CD4-positive, alpha-beta T cell (primary cell): ENCODE measurements at regions of chr12 and their contacts with region 1.

Region 1: GRCh38 chr12:1939801-1940607 is 21.6 kb upstream of the CACNA2D4 start:
- DNase-seq: peak; percentile 83 to 97 (median 91)
- ATAC-seq: peak; percentile 100
- H3K4me3 ChIP-seq: no peak overlapping the region
- H3K4me3 Mint-ChIP-seq: no peak overlapping the region
- H3K27ac ChIP-seq: peak overlapping the region in 1 of 2 donors; percentile 38
- H3K27ac Mint-ChIP-seq: no peak overlapping the region
- H3K4me1 ChIP-seq: peaks cover 6% of the 10 kb centered on the region
- H3K4me1 Mint-ChIP-seq: peaks cover 6% of the 10 kb centered on the region
- H3K27me3 ChIP-seq: no peaks in the 10 kb centered on the region
- H3K27me3 Mint-ChIP-seq: no peaks in the 10 kb centered on the region
- CTCF ChIP-seq: peak; percentile 96

Region 2: DNA sequence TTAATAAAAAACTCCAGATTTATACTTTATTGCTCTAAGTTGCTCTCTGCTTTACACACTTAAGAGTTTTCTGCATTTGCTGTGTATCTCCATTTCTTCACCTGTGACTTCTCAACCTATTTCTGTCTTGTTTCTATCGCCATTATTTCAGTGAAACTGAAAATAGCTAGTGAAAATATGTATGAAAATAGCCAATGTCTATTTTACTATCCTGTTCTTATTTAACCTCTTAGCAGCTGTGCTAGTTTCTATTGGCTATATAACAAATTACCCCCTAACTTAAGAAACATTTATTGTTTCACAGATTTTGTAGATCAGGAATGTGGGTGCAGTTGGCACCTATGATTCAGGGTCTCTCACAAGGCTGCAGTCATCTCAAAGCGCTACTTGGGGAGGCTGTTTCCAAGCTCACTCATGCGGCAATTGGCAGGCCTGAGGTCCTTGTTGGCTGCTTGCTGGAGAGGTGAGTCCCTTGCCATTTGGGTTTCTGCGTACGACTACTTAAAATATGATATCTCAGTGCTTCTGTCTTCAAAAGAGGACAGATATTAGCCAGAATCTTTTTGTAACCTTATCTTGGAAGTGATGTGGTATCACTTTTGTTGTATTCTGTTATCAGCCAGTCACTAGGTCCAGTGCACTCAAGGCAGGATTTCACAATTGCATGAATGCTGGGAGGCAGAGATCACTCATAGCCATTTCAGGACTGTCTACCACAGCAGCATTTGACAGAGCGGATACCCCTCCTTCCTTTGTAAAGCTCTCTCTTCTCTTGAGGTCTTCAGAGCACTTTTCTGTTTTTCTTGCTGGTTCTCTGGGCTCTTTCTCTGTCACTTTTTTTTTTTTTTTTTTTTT is 941.8 kb before region 1 on chr12:
- CTCF ChIA-PET with region 1: no interaction called
- POLR2A ChIA-PET with region 1: no interaction called
- intact Hi-C with region 1: no loop called
- DNase-seq: no peak
- ATAC-seq: no peak
- H3K4me3 ChIP-seq: no peak overlapping the region
- H3K4me3 Mint-ChIP-seq: no peak overlapping the region
- H3K27ac ChIP-seq: no peak overlapping the region
- H3K27ac Mint-ChIP-seq: no peak overlapping the region
- H3K4me1 ChIP-seq: no peaks in the 10 kb centered on the region
- H3K4me1 Mint-ChIP-seq: peaks cover 34% of the 10 kb centered on the region
- H3K27me3 ChIP-seq: no peaks in the 10 kb centered on the region
- H3K27me3 Mint-ChIP-seq: no peaks in the 10 kb centered on the region
- CTCF ChIP-seq: no peak

Region 3: DNA sequence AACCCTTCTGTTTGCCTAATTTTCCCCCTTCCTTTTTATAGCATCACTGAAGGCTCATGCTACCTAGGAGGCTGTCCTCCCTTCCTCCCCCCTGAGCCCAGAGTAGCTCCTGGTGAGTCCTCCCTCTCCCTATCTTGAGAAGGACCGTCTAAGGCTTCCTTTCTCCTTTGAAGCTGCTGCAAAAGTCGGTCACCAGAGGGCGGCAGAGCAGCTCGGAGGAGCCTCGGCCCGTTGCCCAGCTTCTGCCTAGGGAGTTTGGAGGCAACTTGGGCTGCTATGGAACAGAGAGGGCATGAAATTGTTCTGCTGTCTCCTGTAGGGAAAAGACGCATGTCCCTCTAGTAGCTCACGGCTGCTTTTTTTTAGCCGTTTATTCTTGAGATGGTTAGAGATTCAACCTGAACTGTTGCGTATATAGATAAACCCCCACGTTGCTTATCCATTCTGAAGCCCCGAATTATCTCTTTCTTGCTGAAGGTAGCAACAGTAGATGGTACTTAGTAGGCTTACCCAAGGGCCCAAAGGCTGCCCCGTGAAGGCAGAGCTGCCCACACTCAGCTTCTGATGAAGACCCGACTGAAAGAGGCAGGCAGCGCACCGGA is 305.3 kb before region 1 on chr12:
- CTCF ChIA-PET with region 1: interaction called, 19 read pairs
- POLR2A ChIA-PET with region 1: interaction called, 8 read pairs
- intact Hi-C with region 1: loop called in 1 of 2 experiments (anchors 1 kb)
- DNase-seq: peak; percentile 40 to 75 (median 54)
- ATAC-seq: peak; percentile 68
- H3K4me3 ChIP-seq: no peak overlapping the region
- H3K4me3 Mint-ChIP-seq: no peak overlapping the region
- H3K27ac ChIP-seq: no peak overlapping the region
- H3K27ac Mint-ChIP-seq: no peak overlapping the region
- H3K4me1 ChIP-seq: peaks cover 21% of the 10 kb centered on the region
- H3K4me1 Mint-ChIP-seq: peaks cover 20% of the 10 kb centered on the region
- H3K27me3 ChIP-seq: peaks cover 34 to 43% of the 10 kb centered on the region in 2 experiments
- H3K27me3 Mint-ChIP-seq: peaks cover 54% of the 10 kb centered on the region
- CTCF ChIP-seq: peak; percentile 61

Region 4: GRCh38 chr12:1650260-1650977 is 289.6 kb before region 1 on chr12:
- CTCF ChIA-PET with region 1: interaction called, 52 read pairs
- POLR2A ChIA-PET with region 1: interaction called, 3 read pairs
- intact Hi-C with region 1: loop called (anchors 1 kb)
- DNase-seq: no peak
- ATAC-seq: no peak
- H3K4me3 ChIP-seq: no peak overlapping the region
- H3K4me3 Mint-ChIP-seq: no peak overlapping the region
- H3K27ac ChIP-seq: no peak overlapping the region
- H3K27ac Mint-ChIP-seq: no peak overlapping the region
- H3K4me1 ChIP-seq: peaks cover 7% of the 10 kb centered on the region
- H3K4me1 Mint-ChIP-seq: no peaks in the 10 kb centered on the region
- H3K27me3 ChIP-seq: no peaks in the 10 kb centered on the region
- H3K27me3 Mint-ChIP-seq: peaks cover 4% of the 10 kb centered on the region
- CTCF ChIP-seq: no peak

Region 5: DNA sequence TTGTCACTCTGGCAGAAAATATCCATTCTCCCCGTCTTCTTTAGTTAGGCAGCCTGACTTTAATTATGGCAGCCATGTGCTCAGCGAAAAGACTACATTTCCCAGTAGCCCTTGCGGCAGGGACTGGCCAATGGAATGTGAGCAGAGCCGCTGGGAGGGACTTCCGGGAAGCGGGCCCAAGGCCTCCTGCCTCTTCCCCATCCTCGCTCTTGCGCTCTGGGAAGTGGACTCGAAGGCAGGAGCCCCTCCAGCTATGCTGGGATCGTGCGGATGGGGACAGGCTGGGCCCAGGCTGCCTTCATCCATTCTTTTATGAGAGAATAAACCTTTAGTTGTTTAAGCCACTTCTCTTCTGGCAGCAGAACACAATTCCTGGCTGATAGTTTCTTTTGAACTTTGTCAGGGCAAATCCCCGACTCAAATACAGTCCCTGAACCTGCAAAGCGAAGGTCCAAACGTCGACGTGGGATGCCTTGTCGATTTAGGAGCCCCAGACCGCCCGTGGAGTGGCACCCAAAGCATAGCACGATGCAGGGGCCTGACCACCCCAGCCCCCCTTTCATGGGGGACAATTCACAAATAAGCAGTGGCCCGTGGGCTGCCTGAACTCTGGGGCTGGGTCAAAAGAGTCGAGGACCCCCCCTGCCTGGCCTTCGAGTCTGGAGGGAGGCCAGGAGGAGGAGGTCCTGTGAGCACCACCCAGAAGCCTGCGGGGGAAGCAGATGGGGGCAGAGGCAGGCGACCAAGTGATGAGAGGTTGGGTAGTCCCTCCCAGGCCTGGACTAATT is 135.3 kb before region 1 on chr12:
- CTCF ChIA-PET with region 1: interaction called, 15 read pairs
- POLR2A ChIA-PET with region 1: no interaction called
- intact Hi-C with region 1: no loop called
- DNase-seq: peak; percentile 74 to 93 (median 84)
- ATAC-seq: peak; percentile 99
- H3K4me3 ChIP-seq: no peak overlapping the region
- H3K4me3 Mint-ChIP-seq: peak overlapping the region; percentile 1
- H3K27ac ChIP-seq: no peak overlapping the region
- H3K27ac Mint-ChIP-seq: peak overlapping the region; percentile 47
- H3K4me1 ChIP-seq: peaks cover 43% of the 10 kb centered on the region
- H3K4me1 Mint-ChIP-seq: peaks cover 7% of the 10 kb centered on the region
- H3K27me3 ChIP-seq: no peaks in the 10 kb centered on the region
- H3K27me3 Mint-ChIP-seq: no peaks in the 10 kb centered on the region
- CTCF ChIP-seq: no peak

Region 6: DNA sequence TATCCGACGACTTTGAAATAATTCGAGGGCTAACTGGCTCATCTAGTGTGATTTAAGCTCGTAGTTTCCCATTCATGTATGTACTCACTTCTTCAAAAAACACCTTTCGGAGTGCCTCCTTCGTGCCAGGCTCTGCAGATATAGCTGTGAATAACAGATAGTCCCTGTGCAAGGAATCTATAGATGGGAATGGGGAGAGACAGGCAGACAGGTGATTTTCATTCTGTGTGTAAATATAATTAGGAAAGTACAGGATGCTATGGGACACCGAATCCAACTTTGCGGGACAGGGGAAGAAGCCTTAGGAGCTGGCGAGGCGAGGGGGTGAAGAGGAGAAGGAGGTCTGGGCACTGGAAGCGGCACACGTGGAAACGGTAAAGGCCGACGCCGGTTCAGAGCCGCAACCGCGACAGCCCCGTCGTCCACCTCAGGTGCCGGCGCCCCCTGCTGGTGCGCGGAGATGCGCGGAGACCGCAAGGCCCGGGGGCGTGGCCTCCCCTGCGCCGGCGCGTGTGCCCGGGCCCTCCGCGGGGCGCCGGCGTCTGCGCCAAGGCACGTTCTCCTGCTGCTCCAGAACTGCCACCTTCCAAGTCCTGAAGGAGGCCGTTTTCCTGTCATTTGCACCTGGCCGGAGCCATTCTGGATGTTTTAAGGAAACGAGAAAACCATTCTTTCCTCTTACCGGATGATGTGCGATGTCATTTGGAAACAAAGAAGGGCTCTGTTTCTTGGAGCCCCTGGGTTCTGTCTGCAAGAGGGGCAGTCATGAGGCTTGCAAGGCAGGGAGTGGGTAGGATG is 94.8 kb after region 1 on chr12:
- CTCF ChIA-PET with region 1: interaction called, 11 read pairs
- POLR2A ChIA-PET with region 1: no interaction called
- intact Hi-C with region 1: loop called in 1 of 2 experiments (anchors 5 kb)
- DNase-seq: peak; percentile 71 to 94 (median 83)
- ATAC-seq: peak; percentile 99
- H3K4me3 ChIP-seq: peak overlapping the region; percentile 47
- H3K4me3 Mint-ChIP-seq: peak overlapping the region; percentile 73
- H3K27ac ChIP-seq: no peak overlapping the region
- H3K27ac Mint-ChIP-seq: no peak overlapping the region
- H3K4me1 ChIP-seq: peaks cover 11% of the 10 kb centered on the region
- H3K4me1 Mint-ChIP-seq: peaks cover 16% of the 10 kb centered on the region
- H3K27me3 ChIP-seq: peaks cover 3 to 26% of the 10 kb centered on the region in 2 experiments
- H3K27me3 Mint-ChIP-seq: peaks cover 31% of the 10 kb centered on the region
- CTCF ChIP-seq: peak; percentile 91